ENCODE measurements at regions of chr1 and their contacts with region 1.

Region 1: DNA sequence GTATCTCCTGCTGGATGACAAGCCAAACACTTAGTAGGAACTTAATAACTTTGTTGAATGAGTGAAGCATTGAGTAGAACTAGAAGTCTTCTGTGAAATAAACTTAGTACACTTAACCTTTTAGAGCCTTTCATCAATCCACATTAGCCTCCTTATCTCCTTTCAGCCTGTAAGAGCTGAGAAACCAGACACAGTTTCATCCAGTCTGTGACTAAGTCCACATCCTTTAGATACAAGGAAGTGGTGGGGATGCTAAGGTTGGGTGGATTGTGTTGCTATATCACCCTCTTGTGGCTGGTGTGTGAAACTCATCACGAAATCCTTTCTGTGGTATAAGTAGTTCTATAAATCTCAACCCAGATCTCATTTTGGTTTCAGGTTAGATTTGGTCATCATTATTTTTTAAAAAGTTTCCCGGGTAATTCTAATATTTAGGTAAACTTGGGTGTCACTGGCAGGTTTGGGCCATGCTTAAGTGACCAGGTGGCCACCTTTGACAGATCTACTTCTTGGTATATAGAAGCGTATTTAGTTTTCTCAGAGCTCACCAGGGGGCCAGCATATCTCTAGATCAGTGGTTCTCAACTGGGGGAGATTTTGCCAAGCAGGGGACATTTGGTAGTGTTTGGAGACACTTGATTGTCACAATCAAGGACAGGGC is 27.8 kb upstream of the CD84 start:
- DNase-seq: peak; percentile 81
- ATAC-seq: peak; percentile 98
- H3K4me3 Mint-ChIP-seq: no peak overlapping the region
- H3K27ac Mint-ChIP-seq: peak overlapping the region; percentile 80
- H3K4me1 Mint-ChIP-seq: peaks cover 52% of the 10 kb centered on the region
- H3K27me3 Mint-ChIP-seq: no peaks in the 10 kb centered on the region

Region 2: DNA sequence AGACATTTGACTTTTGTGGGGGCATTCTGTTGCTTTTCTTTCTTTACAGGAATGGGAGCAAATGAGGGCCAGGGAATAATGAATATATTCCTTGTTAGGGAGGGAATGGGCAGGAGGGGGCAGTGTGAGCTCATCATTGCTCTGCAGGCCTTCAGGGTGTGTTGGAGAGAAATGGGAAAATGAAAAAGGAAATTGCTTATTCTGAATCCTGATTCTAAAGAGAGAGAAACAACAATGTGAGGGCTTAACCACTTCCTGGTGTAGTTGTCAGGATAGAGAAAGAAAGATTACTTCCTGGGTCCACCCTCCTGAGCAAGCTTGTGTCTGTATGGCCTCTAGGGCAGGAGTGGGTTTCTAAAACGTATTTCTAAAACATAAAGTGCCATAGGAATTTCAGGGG is 178.5 kb before region 1 on chr1:
- CTCF ChIA-PET with region 1: interaction called, 52 read pairs
- POLR2A ChIA-PET with region 1: interaction called, 11 read pairs
- DNase-seq: peak; percentile 49
- ATAC-seq: peak; percentile 71
- H3K4me3 Mint-ChIP-seq: peak overlapping the region; percentile 32
- H3K27ac Mint-ChIP-seq: peak overlapping the region; percentile 82
- H3K4me1 Mint-ChIP-seq: peaks cover 55% of the 10 kb centered on the region
- H3K27me3 Mint-ChIP-seq: no peaks in the 10 kb centered on the region

Region 3: DNA sequence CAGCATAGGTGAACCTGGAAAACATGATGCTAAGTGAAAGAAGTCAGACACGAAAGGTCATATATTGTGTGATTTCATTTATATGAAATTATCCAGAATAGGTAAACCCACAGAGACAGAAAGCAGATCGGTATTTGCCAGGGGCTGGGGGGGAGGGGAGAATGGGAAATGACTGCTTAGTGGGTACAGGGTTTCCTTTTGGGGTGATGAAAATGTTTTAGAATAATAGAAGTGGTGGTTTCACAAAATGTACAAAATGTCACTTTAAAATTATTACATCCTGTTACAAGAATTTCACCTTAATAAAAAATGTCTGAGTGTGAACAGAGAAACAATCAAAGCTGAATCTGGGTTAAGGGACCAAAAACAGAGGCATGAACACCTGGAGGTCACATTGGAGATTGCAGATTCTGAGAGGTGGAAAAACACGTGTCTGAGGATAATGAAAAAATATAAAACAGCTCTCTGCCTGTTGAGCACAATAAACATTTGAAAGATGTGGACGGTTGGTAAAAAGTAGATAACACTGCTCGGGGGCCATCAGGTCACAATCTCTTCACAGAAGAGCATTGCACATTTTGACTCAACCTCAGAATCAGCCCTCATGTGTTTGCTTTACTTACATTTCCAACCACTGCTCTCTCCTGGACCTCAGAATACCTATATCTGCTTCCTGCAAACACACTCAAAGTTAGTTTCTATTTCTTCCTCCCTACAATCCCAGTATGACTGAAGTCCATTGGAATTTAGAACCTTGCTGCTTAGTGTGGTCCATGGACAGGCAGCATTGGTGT is 87.3 kb before region 1 on chr1:
- CTCF ChIA-PET with region 1: interaction called, 12 read pairs
- POLR2A ChIA-PET with region 1: interaction called, 4 read pairs
- DNase-seq: peak; percentile 48
- ATAC-seq: peak; percentile 65
- H3K4me3 Mint-ChIP-seq: peak overlapping the region; percentile 83
- H3K27ac Mint-ChIP-seq: peak overlapping the region; percentile 93
- H3K4me1 Mint-ChIP-seq: peaks cover 90% of the 10 kb centered on the region
- H3K27me3 Mint-ChIP-seq: no peaks in the 10 kb centered on the region

Region 4: GRCh38 chr1:160550572-160551034 is 56.5 kb before region 1 on chr1:
- CTCF ChIA-PET with region 1: interaction called, 185 read pairs
- POLR2A ChIA-PET with region 1: no interaction called
- DNase-seq: peak; percentile 57
- ATAC-seq: peak; percentile 53
- H3K4me3 Mint-ChIP-seq: no peak overlapping the region
- H3K27ac Mint-ChIP-seq: no peak overlapping the region
- H3K4me1 Mint-ChIP-seq: no peaks in the 10 kb centered on the region
- H3K27me3 Mint-ChIP-seq: no peaks in the 10 kb centered on the region

Region 5: GRCh38 chr1:160567858-160568682 is 39.1 kb before region 1 on chr1:
- CTCF ChIA-PET with region 1: interaction called, 19 read pairs
- POLR2A ChIA-PET with region 1: no interaction called
- DNase-seq: peak; percentile 80
- ATAC-seq: peak; percentile 85
- H3K4me3 Mint-ChIP-seq: peak overlapping the region; percentile 64
- H3K27ac Mint-ChIP-seq: peak overlapping the region; percentile 99
- H3K4me1 Mint-ChIP-seq: peaks cover 75% of the 10 kb centered on the region
- H3K27me3 Mint-ChIP-seq: no peaks in the 10 kb centered on the region

Region 6: GRCh38 chr1:160618763-160619274 is 11.7 kb after region 1 on chr1:
- CTCF ChIA-PET with region 1: interaction called, 65 read pairs
- POLR2A ChIA-PET with region 1: interaction called, 3 read pairs
- DNase-seq: peak; percentile 61
- ATAC-seq: no peak
- H3K4me3 Mint-ChIP-seq: no peak overlapping the region
- H3K27ac Mint-ChIP-seq: peak overlapping the region; percentile 55
- H3K4me1 Mint-ChIP-seq: peaks cover 73% of the 10 kb centered on the region
- H3K27me3 Mint-ChIP-seq: no peaks in the 10 kb centered on the region

Region 7: GRCh38 chr1:160653620-160654016 is 46.5 kb after region 1 on chr1:
- CTCF ChIA-PET with region 1: no interaction called
- POLR2A ChIA-PET with region 1: no interaction called
- DNase-seq: peak; percentile 20
- ATAC-seq: peak; percentile 62
- H3K4me3 Mint-ChIP-seq: no peak overlapping the region
- H3K27ac Mint-ChIP-seq: no peak overlapping the region
- H3K4me1 Mint-ChIP-seq: peaks cover 76% of the 10 kb centered on the region
- H3K27me3 Mint-ChIP-seq: no peaks in the 10 kb centered on the region